Endothelial cell of umbilical vein (primary cell): ENCODE measurements at regions of chr10 and their contacts with region 1.

Region 1: GRCh38 chr10:99845837-99846382 is 63.5 kb downstream of the ABCC2 start:
- DNase-seq: peak; percentile 94
- H3K4me3 ChIP-seq: peak overlapping the region in 1 of 3 experiments; percentile 41
- H3K27ac ChIP-seq: peak overlapping the region; percentile 10
- H3K4me1 ChIP-seq: peaks cover 18% of the 10 kb centered on the region
- H3K27me3 ChIP-seq: no peaks in the 10 kb centered on the region
- CTCF ChIP-seq: peak; percentile 72 to 94
- POLR2A ChIP-seq: no peak

Region 2: GRCh38 chr10:99467236-99467999 is 378.5 kb before region 1 on chr10:
- CTCF ChIA-PET with region 1: no interaction called
- POLR2A ChIA-PET with region 1: no interaction called
- dilution Hi-C with region 1: no loop called
- intact Hi-C with region 1: no loop called
- DNase-seq: peak; percentile 97
- H3K4me3 ChIP-seq: peak overlapping the region in 1 of 3 experiments; percentile 11
- H3K27ac ChIP-seq: peak overlapping the region; percentile 95
- H3K4me1 ChIP-seq: peaks cover 35% of the 10 kb centered on the region
- H3K27me3 ChIP-seq: no peaks in the 10 kb centered on the region
- CTCF ChIP-seq: no peak
- POLR2A ChIP-seq: no peak

Region 3: DNA sequence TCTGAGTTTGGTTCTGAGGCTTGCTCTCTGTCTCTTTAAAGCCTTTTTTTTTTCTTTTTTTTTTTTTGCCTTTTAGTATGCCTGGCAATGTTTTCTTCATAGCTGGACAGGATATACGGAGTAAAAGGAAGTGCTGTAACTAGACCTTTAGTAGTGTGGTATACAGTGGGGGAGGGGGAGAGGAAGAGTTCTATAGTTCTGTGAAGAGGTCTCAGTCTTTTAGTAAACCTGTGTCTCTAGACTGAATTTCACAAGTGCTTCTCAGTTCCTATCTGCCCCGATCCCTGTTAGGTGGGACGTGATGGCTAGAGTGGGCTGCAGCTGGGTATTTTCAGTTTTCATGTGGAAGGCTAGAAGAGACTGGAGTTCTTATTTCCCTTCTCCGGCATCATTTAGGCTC is 66.6 kb before region 1 on chr10:
- CTCF ChIA-PET with region 1: interaction called, 7 read pairs
- POLR2A ChIA-PET with region 1: interaction called, 3 read pairs
- dilution Hi-C with region 1: no loop called
- intact Hi-C with region 1: loop called (anchors 1 kb)
- DNase-seq: peak; percentile 95
- H3K4me3 ChIP-seq: peak overlapping the region; percentile 0 to 75 (median 42)
- H3K27ac ChIP-seq: peak overlapping the region; percentile 100
- H3K4me1 ChIP-seq: peaks cover 79% of the 10 kb centered on the region
- H3K27me3 ChIP-seq: no peaks in the 10 kb centered on the region
- CTCF ChIP-seq: no peak
- POLR2A ChIP-seq: peak; percentile 41

Region 4: DNA sequence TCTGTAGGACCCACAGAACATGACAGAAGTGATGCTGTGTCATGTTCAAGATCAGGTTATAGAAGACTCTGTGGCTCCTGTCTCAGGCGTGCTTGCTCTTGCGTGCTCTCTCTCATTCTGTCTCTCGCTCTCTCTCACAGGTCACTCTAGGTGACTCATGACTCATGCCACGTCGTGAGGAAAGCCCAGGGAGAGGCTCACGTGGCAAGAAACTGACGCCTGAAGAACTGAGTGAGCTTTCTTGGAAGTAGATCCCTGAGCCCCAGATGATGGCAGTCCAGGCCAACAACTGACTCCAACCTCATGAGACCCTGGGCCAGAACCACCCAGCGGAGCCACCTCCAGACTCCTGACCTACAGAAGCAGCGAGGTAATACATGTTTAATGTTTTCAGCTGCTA is 60.6 kb after region 1 on chr10:
- CTCF ChIA-PET with region 1: interaction called, 13 read pairs
- POLR2A ChIA-PET with region 1: no interaction called
- dilution Hi-C with region 1: no loop called
- intact Hi-C with region 1: no loop called
- DNase-seq: peak; percentile 67
- H3K4me3 ChIP-seq: no peak overlapping the region
- H3K27ac ChIP-seq: peak overlapping the region; percentile 66
- H3K4me1 ChIP-seq: peaks cover 21% of the 10 kb centered on the region
- H3K27me3 ChIP-seq: no peaks in the 10 kb centered on the region
- CTCF ChIP-seq: peak; percentile 8 to 36
- POLR2A ChIP-seq: no peak

Region 5: DNA sequence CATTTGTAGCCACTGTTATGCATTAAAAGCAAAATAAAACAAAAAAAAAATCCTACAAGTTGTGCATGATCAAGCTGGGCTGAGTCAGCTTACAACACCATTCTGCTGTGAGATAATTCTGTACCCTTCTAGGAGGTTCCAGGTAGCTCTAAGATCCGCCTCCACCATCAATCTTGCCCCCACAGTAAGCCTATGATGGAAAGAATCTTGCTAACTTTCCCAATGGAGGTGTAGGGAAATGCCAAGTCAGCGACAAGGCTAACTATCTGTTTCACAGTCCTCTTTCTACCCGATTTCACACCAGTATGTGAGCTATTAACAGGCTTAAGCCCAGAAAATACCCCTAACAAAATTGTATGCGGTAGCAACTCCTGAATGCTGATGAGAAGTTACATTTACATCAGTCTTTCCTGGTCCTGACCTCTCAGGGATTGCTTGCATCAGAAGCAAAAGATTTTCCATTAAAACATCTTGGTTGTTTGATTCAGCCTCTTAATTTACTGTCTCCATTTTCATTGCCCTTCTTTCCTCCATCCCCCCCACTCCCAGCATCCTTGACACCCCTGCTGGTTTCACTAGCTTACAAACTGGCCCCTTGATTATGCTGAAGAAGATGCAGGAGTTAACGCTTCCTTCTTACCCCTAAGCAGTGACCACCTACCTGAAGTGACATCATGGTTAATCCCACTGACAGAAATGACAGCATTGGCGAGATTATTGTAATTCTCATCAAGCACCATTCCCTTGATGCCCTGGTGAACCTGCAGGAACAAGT is 208.0 kb after region 1 on chr10:
- CTCF ChIA-PET with region 1: interaction called, 174 read pairs
- POLR2A ChIA-PET with region 1: no interaction called
- dilution Hi-C with region 1: no loop called
- intact Hi-C with region 1: no loop called
- DNase-seq: no peak
- H3K4me3 ChIP-seq: no peak overlapping the region
- H3K27ac ChIP-seq: no peak overlapping the region
- H3K4me1 ChIP-seq: no peaks in the 10 kb centered on the region
- H3K27me3 ChIP-seq: peaks cover 18 to 21% of the 10 kb centered on the region in 2 experiments
- CTCF ChIP-seq: no peak
- POLR2A ChIP-seq: no peak

Region 6: DNA sequence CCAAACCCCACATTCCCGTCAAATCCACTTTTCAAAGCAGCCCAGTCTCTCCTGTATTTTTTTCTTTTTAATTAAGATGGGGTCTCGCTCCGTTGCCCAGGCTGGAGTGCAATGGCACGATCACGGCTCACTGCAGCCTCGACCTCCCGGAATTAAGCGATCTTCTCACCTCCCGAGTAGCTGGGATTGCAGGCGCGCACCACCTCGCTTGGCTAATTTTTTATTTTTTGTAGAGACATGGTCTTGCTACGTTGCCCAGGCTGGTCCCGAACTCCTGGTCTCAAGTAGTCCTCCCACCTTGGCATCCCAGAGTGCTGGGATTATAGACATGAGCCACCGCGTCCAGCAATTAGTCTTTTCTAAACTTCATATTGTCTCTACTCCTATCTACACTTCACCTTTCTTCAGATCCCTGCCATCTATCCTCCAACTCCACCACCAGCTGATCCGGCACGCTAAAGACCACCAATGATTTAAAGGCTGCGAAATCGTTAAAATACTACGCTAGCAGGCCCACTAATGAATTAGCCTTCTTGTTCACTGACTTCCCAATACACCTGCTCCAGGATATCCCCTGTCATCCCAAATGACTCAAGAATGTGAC is 384.0 kb after region 1 on chr10:
- CTCF ChIA-PET with region 1: interaction called, 6 read pairs
- POLR2A ChIA-PET with region 1: no interaction called
- dilution Hi-C with region 1: no loop called
- intact Hi-C with region 1: loop called (anchors 5 kb)
- DNase-seq: no peak
- H3K4me3 ChIP-seq: peak overlapping the region; percentile 42 to 72 (median 69)
- H3K27ac ChIP-seq: peak overlapping the region; percentile 46
- H3K4me1 ChIP-seq: peaks cover 2% of the 10 kb centered on the region
- H3K27me3 ChIP-seq: no peaks in the 10 kb centered on the region
- CTCF ChIP-seq: no peak
- POLR2A ChIP-seq: no peak